ENCODE measurements at regions of chr3 and their contacts with region 1.

Region 1: DNA sequence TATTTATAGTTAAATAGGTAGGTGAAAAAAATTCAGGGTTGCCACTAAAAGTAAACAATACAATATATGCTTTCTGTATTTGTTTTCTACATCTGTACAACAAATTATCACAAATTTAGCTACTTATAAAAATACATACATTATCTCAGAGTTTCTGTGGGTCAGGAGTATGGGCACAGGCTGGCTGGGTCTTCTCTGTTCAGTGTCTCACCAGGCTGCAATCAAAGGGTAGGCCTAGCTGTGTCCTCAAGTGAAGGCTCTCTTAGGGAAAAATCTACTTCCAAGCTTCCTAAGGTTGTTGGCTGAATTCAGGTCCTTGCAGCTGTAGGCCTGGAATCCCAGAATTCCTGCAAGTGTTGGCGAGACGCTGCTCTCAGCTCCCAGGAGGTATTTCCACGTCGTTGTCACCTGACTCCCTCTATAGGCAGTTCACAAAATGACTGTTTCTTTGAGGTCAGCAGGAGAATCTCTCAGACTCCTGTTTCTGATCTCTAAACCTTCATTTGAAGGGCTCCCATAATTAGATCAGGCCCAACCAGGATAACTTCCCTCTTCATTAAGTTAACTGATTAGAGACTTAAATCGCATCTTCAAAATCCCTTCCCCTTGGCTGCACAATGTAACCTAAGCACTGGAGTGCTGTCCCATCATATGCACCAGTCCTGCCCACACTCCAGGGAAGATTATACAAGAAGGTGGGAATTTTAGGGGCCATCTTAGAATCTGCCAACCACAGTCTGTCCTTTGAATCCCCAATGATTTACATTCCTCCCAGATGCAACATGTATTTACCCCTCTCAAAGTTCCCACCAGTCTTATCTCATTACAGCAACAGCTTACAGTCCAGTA is 296.6 kb downstream of the SUCLG2 start:
- DNase-seq: no peak
- H3K4me3 Mint-ChIP-seq: no peak overlapping the region
- H3K27ac Mint-ChIP-seq: no peak overlapping the region
- H3K4me1 Mint-ChIP-seq: peaks cover 23% of the 10 kb centered on the region
- H3K27me3 Mint-ChIP-seq: peaks cover 1% of the 10 kb centered on the region

Region 2: DNA sequence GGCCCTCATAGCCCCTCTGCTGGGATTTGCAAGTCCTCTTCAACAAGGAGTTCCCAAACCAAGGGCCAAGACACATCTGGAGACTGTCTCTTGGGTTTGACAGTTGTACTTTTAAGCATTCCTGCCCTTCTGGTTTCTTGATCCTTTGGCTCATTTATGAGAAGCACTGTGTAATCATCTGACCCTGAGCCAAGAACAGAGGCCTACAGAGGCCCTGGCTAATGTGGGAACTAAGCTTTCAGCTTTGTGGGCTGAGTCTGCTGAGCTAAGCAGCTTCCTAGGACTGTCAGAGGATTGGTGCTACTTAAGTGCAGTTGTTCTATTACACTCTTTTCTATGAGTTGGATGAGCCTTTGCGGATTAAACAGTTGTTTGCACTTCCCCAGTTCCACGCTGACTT is 181.4 kb before region 1 on chr3:
- CTCF ChIA-PET with region 1: no interaction called
- POLR2A ChIA-PET with region 1: no interaction called
- intact Hi-C with region 1: no loop called
- DNase-seq: no peak
- H3K4me3 Mint-ChIP-seq: no peak overlapping the region
- H3K27ac Mint-ChIP-seq: no peak overlapping the region
- H3K4me1 Mint-ChIP-seq: no peaks in the 10 kb centered on the region
- H3K27me3 Mint-ChIP-seq: peaks cover 3% of the 10 kb centered on the region

Region 3: GRCh38 chr3:67196677-67197076 is 161.2 kb before region 1 on chr3:
- CTCF ChIA-PET with region 1: no interaction called
- POLR2A ChIA-PET with region 1: no interaction called
- intact Hi-C with region 1: no loop called
- DNase-seq: no peak
- H3K4me3 Mint-ChIP-seq: no peak overlapping the region
- H3K27ac Mint-ChIP-seq: no peak overlapping the region
- H3K4me1 Mint-ChIP-seq: no peaks in the 10 kb centered on the region
- H3K27me3 Mint-ChIP-seq: no peaks in the 10 kb centered on the region

Region 4: DNA sequence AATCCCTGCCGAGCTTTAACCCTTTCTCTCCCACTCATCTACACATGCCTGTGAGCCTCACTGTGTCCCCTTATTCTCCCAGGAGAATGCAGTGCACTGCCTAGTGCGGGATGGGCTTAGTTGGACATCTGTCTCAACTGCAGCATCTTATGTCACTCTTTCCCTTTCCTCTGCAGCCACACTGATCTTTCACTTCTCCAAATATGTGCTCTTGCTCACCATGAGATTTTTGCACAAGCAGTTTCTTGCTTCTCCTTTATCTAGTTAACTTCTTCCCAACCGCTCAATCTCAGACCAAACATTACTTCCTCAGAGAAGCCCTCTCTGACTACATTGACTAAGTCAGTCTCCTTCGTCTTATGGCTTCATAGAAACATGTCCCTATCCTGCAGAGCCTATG is 67.4 kb before region 1 on chr3:
- CTCF ChIA-PET with region 1: no interaction called
- POLR2A ChIA-PET with region 1: no interaction called
- intact Hi-C with region 1: no loop called
- DNase-seq: no peak
- H3K4me3 Mint-ChIP-seq: no peak overlapping the region
- H3K27ac Mint-ChIP-seq: no peak overlapping the region
- H3K4me1 Mint-ChIP-seq: peaks cover 10% of the 10 kb centered on the region
- H3K27me3 Mint-ChIP-seq: no peaks in the 10 kb centered on the region

Region 5: DNA sequence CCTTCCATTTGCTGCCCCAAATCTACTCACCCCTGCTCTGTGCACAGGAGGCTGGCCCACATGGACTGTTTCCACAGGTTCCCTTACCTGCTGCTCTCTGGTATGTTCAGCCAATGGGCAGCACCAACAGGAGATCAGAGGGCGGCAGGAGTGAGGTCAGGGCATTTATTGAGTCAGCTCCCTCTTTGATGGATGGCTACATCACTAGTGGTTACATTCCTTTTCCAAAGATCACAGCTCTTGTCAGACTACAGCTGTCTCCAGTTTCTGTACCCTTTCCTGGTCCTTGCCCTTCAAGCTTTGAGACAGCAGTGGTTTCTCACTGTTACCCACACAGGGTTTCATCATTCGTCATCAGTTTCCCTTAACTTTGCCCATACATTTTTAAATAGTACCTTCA is 28.5 kb before region 1 on chr3:
- CTCF ChIA-PET with region 1: no interaction called
- POLR2A ChIA-PET with region 1: no interaction called
- intact Hi-C with region 1: loop called (anchors 5 kb)
- DNase-seq: peak; percentile 51
- H3K4me3 Mint-ChIP-seq: no peak overlapping the region
- H3K27ac Mint-ChIP-seq: no peak overlapping the region
- H3K4me1 Mint-ChIP-seq: peaks cover 11% of the 10 kb centered on the region
- H3K27me3 Mint-ChIP-seq: peaks cover 8% of the 10 kb centered on the region

Region 6: GRCh38 chr3:67495751-67496150 is 137.9 kb after region 1 on chr3:
- CTCF ChIA-PET with region 1: no interaction called
- POLR2A ChIA-PET with region 1: no interaction called
- intact Hi-C with region 1: no loop called
- DNase-seq: no peak
- H3K4me3 Mint-ChIP-seq: no peak overlapping the region
- H3K27ac Mint-ChIP-seq: no peak overlapping the region
- H3K4me1 Mint-ChIP-seq: no peaks in the 10 kb centered on the region
- H3K27me3 Mint-ChIP-seq: no peaks in the 10 kb centered on the region